GM23248 (cell line): ENCODE measurements at regions of chr18 and their contacts with region 1.

Region 1: DNA sequence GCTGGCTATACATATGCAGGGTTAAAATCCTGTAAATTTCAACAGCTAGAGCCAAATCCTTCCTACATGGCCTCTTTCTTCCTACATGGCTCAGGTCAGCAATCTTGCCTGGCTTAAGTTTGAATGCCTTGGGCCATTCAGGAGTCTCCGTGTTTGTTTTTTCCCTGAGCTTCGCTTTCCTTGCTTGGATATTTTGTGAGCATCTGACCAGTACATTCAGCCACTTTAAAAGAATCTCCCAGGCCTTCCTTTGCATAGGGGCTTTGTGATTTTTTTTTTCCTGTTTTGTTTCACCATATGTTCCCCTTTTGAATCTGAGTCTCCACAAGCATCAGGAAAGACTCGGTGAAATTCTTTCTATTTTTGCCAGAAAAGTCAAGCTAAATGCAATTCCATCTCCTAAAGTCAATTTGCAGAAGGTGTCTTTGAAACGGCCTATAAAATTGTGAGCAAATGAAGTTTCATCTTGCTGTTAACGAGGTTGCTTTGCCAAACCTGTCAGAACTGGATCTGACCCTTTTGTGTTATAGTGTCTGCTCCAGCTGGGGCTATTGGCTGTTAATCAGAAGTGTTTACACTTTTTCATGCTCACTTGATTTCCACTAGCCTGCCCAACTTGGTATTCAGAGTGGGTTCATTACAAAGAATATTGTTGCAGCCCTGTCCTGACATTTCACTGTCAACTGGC is 256.9 kb downstream of the DCC start:
- DNase-seq: no peak
- H3K4me3 ChIP-seq: no peak overlapping the region
- H3K27ac ChIP-seq: no peak overlapping the region
- H3K4me1 ChIP-seq: no peaks in the 10 kb centered on the region
- H3K27me3 ChIP-seq: no peaks in the 10 kb centered on the region

Region 2: GRCh38 chr18:52219102-52219501 is 377.8 kb before region 1 on chr18:
- in situ Hi-C with region 1: no loop called
- DNase-seq: peak; percentile 58
- H3K4me3 ChIP-seq: no peak overlapping the region
- H3K27ac ChIP-seq: no peak overlapping the region
- H3K4me1 ChIP-seq: peaks cover 7% of the 10 kb centered on the region; the same call in 1 of the 2 replicates
- H3K27me3 ChIP-seq: no peaks in the 10 kb centered on the region

Region 3: DNA sequence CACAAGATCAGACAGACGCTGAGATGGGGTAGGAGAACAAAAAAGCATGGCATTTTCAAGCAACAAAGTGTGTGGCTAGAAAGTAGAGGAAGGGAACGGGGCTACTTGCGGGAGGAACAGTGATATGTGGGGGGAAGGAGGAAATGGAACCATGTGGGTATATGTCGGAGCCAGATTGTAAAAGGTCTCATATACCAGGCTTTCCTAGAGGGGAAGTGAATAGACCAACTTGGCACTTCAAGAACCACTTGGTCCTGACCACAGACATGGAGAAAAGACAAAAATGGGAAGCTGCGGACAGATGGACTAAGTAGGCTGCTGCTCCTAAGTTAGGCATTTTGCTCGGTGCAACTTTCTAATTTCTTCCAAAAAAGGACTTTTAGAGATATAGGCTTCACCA is 60.9 kb before region 1 on chr18:
- in situ Hi-C with region 1: loop called (anchors 10 kb)
- DNase-seq: no peak
- H3K4me3 ChIP-seq: no peak overlapping the region
- H3K27ac ChIP-seq: no peak overlapping the region
- H3K4me1 ChIP-seq: no peaks in the 10 kb centered on the region
- H3K27me3 ChIP-seq: no peaks in the 10 kb centered on the region

Region 4: DNA sequence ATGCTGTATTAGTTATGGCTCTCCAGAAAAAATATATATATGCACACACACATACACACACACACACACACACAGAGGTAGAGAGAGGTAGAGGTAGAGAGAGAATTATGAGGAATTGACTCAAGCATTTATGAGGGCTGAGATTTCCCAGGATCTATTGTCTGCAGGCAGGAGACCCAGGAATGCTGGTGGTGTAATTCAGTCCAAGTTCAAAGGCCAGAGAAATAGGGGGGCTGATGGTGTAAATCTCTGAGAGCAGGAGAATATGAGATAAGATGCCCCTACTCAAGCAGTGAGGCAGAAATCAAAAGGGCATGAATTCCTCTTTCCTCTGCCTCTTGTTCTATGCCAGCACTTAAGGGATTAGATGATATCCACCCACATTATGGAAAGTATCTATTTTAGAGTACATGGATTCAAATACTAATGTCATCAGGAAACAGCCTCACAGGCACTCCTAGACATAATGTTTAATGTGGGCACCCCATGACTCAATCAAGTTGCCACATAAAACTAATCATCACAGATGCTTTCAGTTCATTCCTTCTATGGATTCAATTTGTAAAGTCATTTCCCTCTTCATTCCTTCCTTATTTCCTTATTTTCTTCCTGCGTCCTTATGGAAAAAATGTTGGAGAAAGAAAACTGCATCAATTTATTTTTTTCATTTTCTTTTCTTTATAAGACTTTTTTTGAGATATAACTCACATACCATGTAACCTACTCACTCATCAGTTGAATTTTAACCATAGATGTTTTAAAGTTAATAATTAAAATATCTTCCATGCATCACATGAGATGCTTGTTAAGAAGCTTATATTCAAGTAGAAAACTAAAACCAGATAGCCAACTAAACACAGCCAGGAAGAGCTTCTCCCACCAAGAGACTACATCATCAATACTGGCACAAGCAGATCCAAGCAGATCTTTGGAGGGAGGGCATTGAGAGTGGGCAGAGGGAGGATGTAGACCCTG is 1221.4 kb after region 1 on chr18:
- in situ Hi-C with region 1: no loop called
- DNase-seq: peak; percentile 12
- H3K4me3 ChIP-seq: no peak overlapping the region
- H3K27ac ChIP-seq: no peak overlapping the region
- H3K4me1 ChIP-seq: no peaks in the 10 kb centered on the region
- H3K27me3 ChIP-seq: no peaks in the 10 kb centered on the region